ENCODE measurements at regions of chr1 and their contacts with region 1.

Region 1: GRCh38 chr1:158124999-158125398 is 55.7 kb upstream of the CD1D start:
- DNase-seq: peak; percentile 89
- H3K4me3 ChIP-seq: no peak overlapping the region
- H3K27ac ChIP-seq: no peak overlapping the region
- H3K4me1 ChIP-seq: peaks cover 18% of the 10 kb centered on the region
- H3K27me3 ChIP-seq: no peaks in the 10 kb centered on the region
- CTCF ChIP-seq: peak; percentile 92 to 98

Region 2: DNA sequence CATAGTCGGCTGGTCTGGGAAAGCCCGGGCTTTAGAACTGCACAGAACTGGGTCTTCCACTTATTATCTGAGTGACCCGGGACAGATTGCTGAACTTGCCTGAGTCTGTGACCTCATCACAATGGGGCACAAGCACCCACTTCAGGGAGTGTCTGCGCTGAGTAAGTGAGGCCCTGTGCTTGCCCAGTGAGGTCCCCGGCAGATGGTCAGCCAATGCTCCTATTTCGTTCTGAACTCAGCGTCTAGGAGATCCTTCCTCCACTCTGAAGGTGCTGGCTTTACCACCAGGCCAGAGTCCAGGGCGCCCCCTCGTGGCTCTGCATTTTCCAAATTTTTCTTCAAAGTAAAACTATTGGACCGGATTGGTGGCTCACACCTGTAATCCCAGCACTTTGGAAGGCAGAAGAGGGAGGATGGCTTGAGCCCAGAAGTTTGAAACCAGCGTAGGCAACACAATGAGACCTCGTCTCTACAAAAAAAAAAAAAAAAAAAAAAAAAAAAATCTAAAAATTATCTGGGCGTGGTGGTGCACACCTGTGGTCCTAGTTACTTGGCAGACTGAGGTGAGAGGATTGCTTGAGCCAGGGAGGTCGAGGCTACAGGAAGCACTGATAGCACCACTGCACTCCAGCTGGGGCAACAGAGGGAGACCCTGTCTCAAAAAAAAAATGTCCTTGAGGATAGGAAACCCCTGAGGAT is 634.4 kb before region 1 on chr1:
- CTCF ChIA-PET with region 1: no interaction called
- dilution Hi-C with region 1: no loop called
- in situ Hi-C with region 1: no loop called
- intact Hi-C with region 1: loop called (anchors 2 kb)
- DNase-seq: peak; percentile 40
- H3K4me3 ChIP-seq: no peak overlapping the region
- H3K27ac ChIP-seq: no peak overlapping the region
- H3K4me1 ChIP-seq: no peaks in the 10 kb centered on the region
- H3K27me3 ChIP-seq: no peaks in the 10 kb centered on the region
- CTCF ChIP-seq: peak; percentile 49 to 71

Region 3: DNA sequence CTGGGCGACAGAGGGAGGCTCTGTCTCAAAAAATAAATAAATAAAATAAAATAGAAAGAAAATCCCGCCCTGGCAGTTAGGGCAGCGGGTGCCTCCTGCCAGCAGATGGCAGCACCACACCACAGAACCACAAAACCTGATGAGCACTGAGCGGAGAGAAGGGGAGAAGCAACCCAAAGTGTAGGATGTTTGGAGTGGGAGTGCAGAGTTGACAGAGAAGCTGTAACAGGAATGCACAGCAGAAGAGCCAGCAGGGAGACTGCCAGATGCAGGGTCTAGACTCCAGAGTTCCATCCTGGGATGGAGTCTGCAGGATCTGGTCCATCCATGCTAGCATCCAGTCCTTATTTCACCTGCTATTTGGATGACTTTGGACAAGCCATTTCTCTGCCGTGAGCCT is 161.3 kb before region 1 on chr1:
- CTCF ChIA-PET with region 1: interaction called, 18 read pairs
- dilution Hi-C with region 1: loop called (anchors 5 kb)
- in situ Hi-C with region 1: loop called (anchors 5 to 10 kb)
- intact Hi-C with region 1: loop called (anchors 1 kb)
- DNase-seq: peak; percentile 60
- H3K4me3 ChIP-seq: no peak overlapping the region
- H3K27ac ChIP-seq: no peak overlapping the region
- H3K4me1 ChIP-seq: peaks cover 31% of the 10 kb centered on the region
- H3K27me3 ChIP-seq: no peaks in the 10 kb centered on the region
- CTCF ChIP-seq: peak; percentile 87 to 89

Region 4: GRCh38 chr1:158035976-158036583 is 88.9 kb before region 1 on chr1:
- CTCF ChIA-PET with region 1: no interaction called
- dilution Hi-C with region 1: no loop called
- in situ Hi-C with region 1: no loop called
- intact Hi-C with region 1: loop called (anchors 5 kb)
- DNase-seq: peak; percentile 24
- H3K4me3 ChIP-seq: no peak overlapping the region
- H3K27ac ChIP-seq: no peak overlapping the region
- H3K4me1 ChIP-seq: peaks cover 30% of the 10 kb centered on the region
- H3K27me3 ChIP-seq: no peaks in the 10 kb centered on the region
- CTCF ChIP-seq: peak; percentile 70 to 72

Region 5: GRCh38 chr1:158177700-158178450 is 52.9 kb after region 1 on chr1:
- CTCF ChIA-PET with region 1: no interaction called
- dilution Hi-C with region 1: no loop called
- in situ Hi-C with region 1: no loop called
- intact Hi-C with region 1: loop called (anchors 1 kb)
- DNase-seq: peak; percentile 81
- H3K4me3 ChIP-seq: peak overlapping the region; percentile 49 to 52 (median 49)
- H3K27ac ChIP-seq: peak overlapping the region; percentile 33
- H3K4me1 ChIP-seq: peaks cover 18% of the 10 kb centered on the region
- H3K27me3 ChIP-seq: no peaks in the 10 kb centered on the region
- CTCF ChIP-seq: no peak

Measured in mammary epithelial cell (primary cell).